ENCODE measurements at regions of chr2 and their contacts with region 1.

Region 1: GRCh38 chr2:219245148-219245898 is at the starts of genes GLB1L and STK16:
- DNase-seq: peak; percentile 82 to 98 (median 94)

Region 2: DNA sequence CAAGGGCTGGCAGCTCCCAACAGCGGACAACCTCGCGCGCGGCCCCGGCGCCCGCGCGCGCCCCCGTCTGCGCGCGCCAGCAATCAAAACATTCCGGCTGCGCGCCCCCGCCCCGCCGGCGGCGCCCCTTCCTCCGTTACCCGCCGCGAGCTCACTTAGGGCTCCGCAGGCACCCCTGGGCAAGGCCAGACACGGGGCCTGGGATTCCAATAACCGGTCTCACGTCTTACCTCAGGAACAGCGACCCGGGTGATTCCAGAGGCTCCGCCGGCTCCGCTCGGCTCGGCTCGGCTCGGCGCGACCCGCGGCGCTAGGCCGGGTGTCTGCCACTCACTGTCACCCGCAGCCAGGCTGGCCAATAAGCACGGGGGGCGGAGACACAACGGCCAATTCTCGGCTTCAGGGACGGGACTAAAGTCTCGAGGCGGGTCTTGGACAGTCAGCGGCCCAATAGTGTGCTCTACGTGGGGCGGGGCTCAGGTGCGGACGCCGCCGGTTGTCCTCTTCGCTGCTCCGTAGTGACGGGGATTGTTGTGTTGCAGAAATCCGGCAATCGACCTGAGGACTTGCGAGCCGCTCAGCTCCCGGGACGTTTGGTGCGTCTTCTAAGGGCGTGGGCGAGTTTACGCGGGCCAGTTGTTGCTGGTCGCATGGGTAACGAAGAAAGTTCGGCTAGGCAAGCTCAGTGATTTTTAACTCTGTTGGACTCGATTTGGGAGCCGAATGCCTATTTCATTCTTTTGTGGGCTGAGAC is 15.8 kb before region 1 on chr2 and contains the starts of genes ANKZF1 and ATG9A:
- intact Hi-C with region 1: loop called (anchors 2 kb)
- DNase-seq: peak; percentile 96 to 100 (median 99)

Measured in head of caudate nucleus (tissue), 42 donors.